CD4-positive, alpha-beta T cell (primary cell): ENCODE measurements at regions of chr14 and their contacts with region 1.

Region 1: DNA sequence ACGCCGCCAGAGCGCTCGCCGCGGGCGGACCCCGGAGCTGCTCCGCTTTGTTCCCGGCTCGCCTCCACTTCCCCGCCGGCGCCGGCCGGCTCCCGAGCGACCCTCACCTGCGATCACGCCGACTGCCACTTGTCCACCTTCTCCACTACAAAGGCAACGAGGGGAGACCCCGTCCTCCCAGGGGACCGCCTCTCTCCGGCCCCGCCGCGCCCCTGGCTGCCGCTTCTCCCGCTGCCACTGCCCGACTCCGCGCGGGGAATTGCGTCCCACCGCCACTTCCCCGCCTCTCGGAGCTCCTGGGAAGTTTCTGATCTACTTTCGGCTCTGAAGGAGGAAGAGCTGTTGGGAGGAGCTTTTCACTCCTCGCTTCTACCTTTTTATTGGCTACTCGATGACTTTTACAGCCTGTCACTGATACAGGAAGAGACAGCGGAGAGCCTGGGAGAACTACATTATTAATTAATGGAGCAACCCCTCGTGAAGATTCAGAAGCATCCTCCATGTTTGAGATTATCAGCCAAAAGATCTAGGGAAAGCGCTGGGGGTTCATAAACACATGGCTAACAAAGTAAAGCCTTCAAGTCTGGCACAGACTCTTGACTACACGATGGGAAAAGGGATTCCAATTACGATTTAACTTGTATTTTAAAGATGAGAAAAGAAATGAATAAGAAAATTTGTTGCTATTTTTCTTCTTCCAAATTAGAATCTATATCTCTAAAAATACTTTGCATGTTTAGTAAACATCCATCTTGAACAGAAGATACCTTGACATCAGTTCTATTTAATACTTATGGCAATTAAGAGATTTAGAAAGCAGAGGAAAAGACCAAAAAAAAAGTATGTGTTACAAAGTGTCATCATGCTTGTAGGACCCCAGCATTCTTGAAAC is at the start of gene BAZ1A:
- DNase-seq: peak; percentile 1 to 82 (median 18)
- ATAC-seq: peak; percentile 9
- H3K4me3 ChIP-seq: peak within 1 kb of the TSS; percentile 96
- H3K4me3 Mint-ChIP-seq: peak within 1 kb of the TSS; percentile 100
- H3K27ac ChIP-seq: peak within 1 kb of the TSS; percentile 100
- H3K27ac Mint-ChIP-seq: peak within 1 kb of the TSS; percentile 97
- H3K4me1 ChIP-seq: peaks cover 19% of the 10 kb centered on the region
- H3K4me1 Mint-ChIP-seq: peaks cover 40% of the 10 kb centered on the region
- H3K27me3 ChIP-seq: no peaks in the 10 kb centered on the region
- H3K27me3 Mint-ChIP-seq: no peaks in the 10 kb centered on the region
- CTCF ChIP-seq: no peak
- total RNA-seq, gene BAZ1A: 46.5 to 52.3 TPM

Region 2: DNA sequence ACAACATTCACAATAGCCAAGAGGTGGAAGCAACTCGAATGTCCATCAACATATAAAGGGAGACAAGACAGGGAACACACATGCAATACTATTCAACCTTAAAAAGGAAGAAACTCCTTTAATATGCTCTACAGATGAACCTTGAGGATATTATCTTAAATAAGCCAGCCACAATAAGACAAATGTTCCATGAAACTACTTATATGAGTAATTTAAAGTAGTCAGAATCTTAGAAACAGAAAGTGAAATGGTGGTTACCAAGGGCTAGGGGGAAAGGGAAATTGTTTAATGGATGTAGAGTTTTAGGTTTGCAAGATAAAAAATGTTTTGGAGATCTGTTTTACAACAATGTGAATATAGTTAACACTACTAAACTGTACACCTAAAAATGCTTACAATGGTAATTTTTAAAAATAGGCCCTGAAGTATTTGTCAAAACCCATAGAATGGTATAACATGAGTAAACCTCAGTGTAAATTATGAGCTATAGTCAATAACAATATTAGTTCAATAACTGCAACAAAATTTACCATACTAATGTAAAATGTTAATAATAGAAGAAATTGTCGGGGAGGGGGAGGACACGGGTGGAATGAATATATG is 995.5 kb before region 1 on chr14:
- CTCF ChIA-PET with region 1: no interaction called
- POLR2A ChIA-PET with region 1: no interaction called
- intact Hi-C with region 1: no loop called
- DNase-seq: no peak
- ATAC-seq: no peak
- H3K4me3 ChIP-seq: no peak overlapping the region
- H3K4me3 Mint-ChIP-seq: no peak overlapping the region
- H3K27ac ChIP-seq: no peak overlapping the region
- H3K27ac Mint-ChIP-seq: no peak overlapping the region
- H3K4me1 ChIP-seq: no peaks in the 10 kb centered on the region
- H3K4me1 Mint-ChIP-seq: no peaks in the 10 kb centered on the region
- H3K27me3 ChIP-seq: no peaks in the 10 kb centered on the region
- H3K27me3 Mint-ChIP-seq: no peaks in the 10 kb centered on the region
- CTCF ChIP-seq: no peak

Region 3: GRCh38 chr14:34707722-34708121 is 167.6 kb before region 1 on chr14:
- CTCF ChIA-PET with region 1: no interaction called
- POLR2A ChIA-PET with region 1: no interaction called
- intact Hi-C with region 1: no loop called
- DNase-seq: no peak
- ATAC-seq: no peak
- H3K4me3 ChIP-seq: no peak overlapping the region
- H3K4me3 Mint-ChIP-seq: no peak overlapping the region
- H3K27ac ChIP-seq: no peak overlapping the region
- H3K27ac Mint-ChIP-seq: no peak overlapping the region
- H3K4me1 ChIP-seq: no peaks in the 10 kb centered on the region
- H3K4me1 Mint-ChIP-seq: peaks cover 9% of the 10 kb centered on the region
- H3K27me3 ChIP-seq: no peaks in the 10 kb centered on the region
- H3K27me3 Mint-ChIP-seq: no peaks in the 10 kb centered on the region
- CTCF ChIP-seq: no peak

Region 4: GRCh38 chr14:34833549-34834523 is 41.4 kb before region 1 on chr14:
- CTCF ChIA-PET with region 1: interaction called, 3 read pairs
- POLR2A ChIA-PET with region 1: interaction called, 15 read pairs
- intact Hi-C with region 1: loop called in 1 of 2 experiments (anchors 5 kb)
- DNase-seq: peak in 3 of 14 experiments; percentile 28 to 53 (median 36)
- ATAC-seq: peak; percentile 74
- H3K4me3 ChIP-seq: no peak overlapping the region
- H3K4me3 Mint-ChIP-seq: no peak overlapping the region
- H3K27ac ChIP-seq: peak overlapping the region in 1 of 2 donors; percentile 25
- H3K27ac Mint-ChIP-seq: peak overlapping the region; percentile 82
- H3K4me1 ChIP-seq: peaks cover 26% of the 10 kb centered on the region
- H3K4me1 Mint-ChIP-seq: peaks cover 61% of the 10 kb centered on the region
- H3K27me3 ChIP-seq: no peaks in the 10 kb centered on the region
- H3K27me3 Mint-ChIP-seq: no peaks in the 10 kb centered on the region
- CTCF ChIP-seq: no peak

Region 5: GRCh38 chr14:34857689-34858449 is 17.4 kb before region 1 on chr14:
- CTCF ChIA-PET with region 1: interaction called, 4 read pairs
- POLR2A ChIA-PET with region 1: interaction called, 36 read pairs
- intact Hi-C with region 1: loop called in 1 of 2 experiments (anchors 2 kb)
- DNase-seq: peak in 6 of 14 experiments; percentile 4 to 75 (median 35)
- ATAC-seq: peak; percentile 83
- H3K4me3 ChIP-seq: no peak overlapping the region
- H3K4me3 Mint-ChIP-seq: peak overlapping the region; percentile 9
- H3K27ac ChIP-seq: peak overlapping the region; percentile 24 to 43
- H3K27ac Mint-ChIP-seq: peak overlapping the region; percentile 55
- H3K4me1 ChIP-seq: peaks cover 18% of the 10 kb centered on the region
- H3K4me1 Mint-ChIP-seq: peaks cover 47% of the 10 kb centered on the region
- H3K27me3 ChIP-seq: no peaks in the 10 kb centered on the region
- H3K27me3 Mint-ChIP-seq: no peaks in the 10 kb centered on the region
- CTCF ChIP-seq: no peak

Region 6: GRCh38 chr14:34931206-34931605 is 55.9 kb after region 1 on chr14:
- CTCF ChIA-PET with region 1: no interaction called
- POLR2A ChIA-PET with region 1: interaction called, 60 read pairs
- intact Hi-C with region 1: loop called (anchors 1 to 5 kb)
- DNase-seq: peak in 12 of 14 experiments; percentile 2 to 91 (median 44)
- ATAC-seq: peak; percentile 91
- H3K4me3 ChIP-seq: peak overlapping the region; percentile 17
- H3K4me3 Mint-ChIP-seq: peak overlapping the region; percentile 26
- H3K27ac ChIP-seq: peak overlapping the region; percentile 80 to 93
- H3K27ac Mint-ChIP-seq: peak overlapping the region; percentile 90
- H3K4me1 ChIP-seq: peaks cover 24% of the 10 kb centered on the region
- H3K4me1 Mint-ChIP-seq: peaks cover 37% of the 10 kb centered on the region
- H3K27me3 ChIP-seq: no peaks in the 10 kb centered on the region
- H3K27me3 Mint-ChIP-seq: no peaks in the 10 kb centered on the region
- CTCF ChIP-seq: no peak

Region 7: GRCh38 chr14:35046048-35046741 is 170.9 kb after region 1 on chr14 and contains the start of gene FAM177A1:
- CTCF ChIA-PET with region 1: no interaction called
- POLR2A ChIA-PET with region 1: interaction called, 20 read pairs
- intact Hi-C with region 1: loop called (anchors 2 to 5 kb)
- DNase-seq: peak; percentile 94 to 100 (median 98)
- ATAC-seq: peak; percentile 83
- H3K4me3 ChIP-seq: peak within 1 kb of the TSS; percentile 68
- H3K4me3 Mint-ChIP-seq: peak within 1 kb of the TSS; percentile 91
- H3K27ac ChIP-seq: peak within 1 kb of the TSS; percentile 96 to 97
- H3K27ac Mint-ChIP-seq: peak within 1 kb of the TSS; percentile 94
- H3K4me1 ChIP-seq: peaks cover 11% of the 10 kb centered on the region
- H3K4me1 Mint-ChIP-seq: peaks cover 36% of the 10 kb centered on the region
- H3K27me3 ChIP-seq: no peaks in the 10 kb centered on the region
- H3K27me3 Mint-ChIP-seq: no peaks in the 10 kb centered on the region
- CTCF ChIP-seq: no peak
- total RNA-seq, gene FAM177A1: 172 to 186 TPM

Region 8: DNA sequence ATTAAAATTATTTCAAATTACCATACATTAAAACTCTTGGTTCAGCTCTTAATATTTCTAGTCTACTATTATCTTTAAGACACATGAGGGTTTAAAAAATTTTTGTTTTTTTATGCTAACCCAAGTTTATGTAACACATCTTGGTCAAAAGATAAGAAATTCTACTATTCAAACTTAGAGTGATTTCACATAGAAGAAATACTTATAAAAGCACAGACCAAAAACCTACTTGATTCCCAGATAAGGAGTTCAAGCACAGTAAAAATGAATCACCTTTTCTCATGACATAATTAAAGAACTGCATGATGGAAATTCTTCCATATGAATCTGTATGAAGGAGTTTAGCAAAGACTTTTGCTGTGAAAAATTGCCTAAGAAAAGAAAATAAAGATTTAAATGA is 232.6 kb after region 1 on chr14:
- CTCF ChIA-PET with region 1: no interaction called
- POLR2A ChIA-PET with region 1: no interaction called
- intact Hi-C with region 1: no loop called
- DNase-seq: no peak
- ATAC-seq: no peak
- H3K4me3 ChIP-seq: no peak overlapping the region
- H3K4me3 Mint-ChIP-seq: no peak overlapping the region
- H3K27ac ChIP-seq: no peak overlapping the region
- H3K27ac Mint-ChIP-seq: no peak overlapping the region
- H3K4me1 ChIP-seq: no peaks in the 10 kb centered on the region
- H3K4me1 Mint-ChIP-seq: peaks cover 11% of the 10 kb centered on the region
- H3K27me3 ChIP-seq: no peaks in the 10 kb centered on the region
- H3K27me3 Mint-ChIP-seq: no peaks in the 10 kb centered on the region
- CTCF ChIP-seq: no peak